ENCODE measurements at regions of chr13 and their contacts with region 1.

Region 1: GRCh38 chr13:62065016-62065415 is 649.4 kb upstream of the PCDH20 start:
- DNase-seq: no peak
- ATAC-seq: no peak
- H3K4me3 ChIP-seq: no peak overlapping the region
- H3K4me3 Mint-ChIP-seq: no peak overlapping the region
- H3K27ac ChIP-seq: no peak overlapping the region
- H3K27ac Mint-ChIP-seq: no peak overlapping the region
- H3K4me1 ChIP-seq: no peaks in the 10 kb centered on the region
- H3K4me1 Mint-ChIP-seq: no peaks in the 10 kb centered on the region
- H3K27me3 ChIP-seq: no peaks in the 10 kb centered on the region
- H3K27me3 Mint-ChIP-seq: no peaks in the 10 kb centered on the region
- CTCF ChIP-seq: no peak

Region 2: GRCh38 chr13:62799931-62800436 is 735.0 kb after region 1 on chr13:
- intact Hi-C with region 1: loop called (anchors 5 kb)
- DNase-seq: no peak
- ATAC-seq: no peak
- H3K4me3 ChIP-seq: no peak overlapping the region
- H3K4me3 Mint-ChIP-seq: no peak overlapping the region
- H3K27ac ChIP-seq: no peak overlapping the region
- H3K27ac Mint-ChIP-seq: no peak overlapping the region
- H3K4me1 ChIP-seq: no peaks in the 10 kb centered on the region
- H3K4me1 Mint-ChIP-seq: no peaks in the 10 kb centered on the region
- H3K27me3 ChIP-seq: no peaks in the 10 kb centered on the region
- H3K27me3 Mint-ChIP-seq: no peaks in the 10 kb centered on the region
- CTCF ChIP-seq: no peak